Activated CD4-positive, alpha-beta T cell treated with anti-CD3 and anti-CD28 coated beads for 36 hours (primary cell): ENCODE measurements at regions of chr17 and their contacts with region 1.

Region 1: DNA sequence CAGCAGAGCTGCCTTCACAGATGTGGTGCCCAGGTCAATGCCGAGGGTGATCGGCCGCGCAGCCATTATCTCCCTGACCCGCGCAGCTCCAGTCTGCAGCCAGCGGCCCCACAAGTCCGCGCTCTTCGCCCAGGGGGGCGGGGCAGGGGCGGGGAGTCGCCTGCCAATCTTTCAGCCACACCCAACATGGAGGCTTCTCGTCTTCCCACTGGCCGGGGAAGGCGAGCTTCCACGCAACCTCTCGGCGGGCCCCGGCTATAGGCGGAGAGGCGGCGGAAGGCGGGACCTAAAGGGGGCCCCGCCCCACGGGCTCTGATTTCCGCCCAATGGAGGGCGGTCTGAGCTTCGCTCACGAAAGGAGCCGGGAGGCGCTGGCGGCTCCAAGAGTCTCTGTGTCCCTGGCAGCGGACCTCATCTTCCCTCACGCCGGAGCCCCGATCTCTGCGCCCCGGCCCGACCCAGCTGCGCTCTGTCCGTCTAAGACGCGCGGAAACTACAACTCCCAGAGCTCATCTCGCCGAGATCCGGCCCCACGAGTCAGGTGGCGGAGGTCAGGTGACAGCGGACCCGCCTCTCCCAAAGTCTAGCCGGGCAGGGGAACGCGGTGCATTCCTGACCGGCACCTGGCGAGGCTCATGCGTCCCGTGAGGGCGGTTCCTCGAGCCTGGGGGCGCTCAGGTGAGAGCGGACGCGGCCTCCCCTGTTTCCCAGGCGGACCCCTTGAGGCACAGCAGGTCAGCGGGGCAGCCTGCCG is at the starts of genes CTNS and SHPK:
- DNase-seq: peak; percentile 97
- ATAC-seq: peak; percentile 97
- H3K4me3 Mint-ChIP-seq: peak within 1 kb of the TSS; percentile 93
- H3K27ac Mint-ChIP-seq: peak within 1 kb of the TSS; percentile 99
- H3K4me1 Mint-ChIP-seq: peaks cover 42% of the 10 kb centered on the region
- H3K27me3 Mint-ChIP-seq: no peaks in the 10 kb centered on the region
- total RNA-seq, gene CTNS: 10.1 to 11.1 TPM
- total RNA-seq, gene SHPK: 12.5 to 15.0 TPM

Region 2: GRCh38 chr17:2336215-2336851 is 1300.0 kb before region 1 on chr17 and contains the start of gene TSR1:
- CTCF ChIA-PET with region 1: no interaction called
- POLR2A ChIA-PET with region 1: no interaction called
- intact Hi-C with region 1: loop called in 1 of 2 experiments (anchors 5 kb)
- DNase-seq: peak; percentile 94
- ATAC-seq: peak; percentile 93
- H3K4me3 Mint-ChIP-seq: no peak within 1 kb of the TSS
- H3K27ac Mint-ChIP-seq: peak within 1 kb of the TSS; percentile 99
- H3K4me1 Mint-ChIP-seq: peaks cover 14% of the 10 kb centered on the region
- H3K27me3 Mint-ChIP-seq: no peaks in the 10 kb centered on the region
- total RNA-seq, gene TSR1: 59.3 to 77.0 TPM

Region 3: GRCh38 chr17:2711601-2712299 is 924.6 kb before region 1 on chr17 and contains the start of gene CLUH:
- CTCF ChIA-PET with region 1: no interaction called
- POLR2A ChIA-PET with region 1: no interaction called
- intact Hi-C with region 1: loop called in 1 of 2 experiments (anchors 1 kb)
- DNase-seq: peak; percentile 98
- ATAC-seq: peak; percentile 95
- H3K4me3 Mint-ChIP-seq: peak within 1 kb of the TSS; percentile 86
- H3K27ac Mint-ChIP-seq: peak within 1 kb of the TSS; percentile 84
- H3K4me1 Mint-ChIP-seq: peaks cover 35% of the 10 kb centered on the region
- H3K27me3 Mint-ChIP-seq: no peaks in the 10 kb centered on the region
- total RNA-seq, gene CLUH: 107 to 123 TPM

Region 4: DNA sequence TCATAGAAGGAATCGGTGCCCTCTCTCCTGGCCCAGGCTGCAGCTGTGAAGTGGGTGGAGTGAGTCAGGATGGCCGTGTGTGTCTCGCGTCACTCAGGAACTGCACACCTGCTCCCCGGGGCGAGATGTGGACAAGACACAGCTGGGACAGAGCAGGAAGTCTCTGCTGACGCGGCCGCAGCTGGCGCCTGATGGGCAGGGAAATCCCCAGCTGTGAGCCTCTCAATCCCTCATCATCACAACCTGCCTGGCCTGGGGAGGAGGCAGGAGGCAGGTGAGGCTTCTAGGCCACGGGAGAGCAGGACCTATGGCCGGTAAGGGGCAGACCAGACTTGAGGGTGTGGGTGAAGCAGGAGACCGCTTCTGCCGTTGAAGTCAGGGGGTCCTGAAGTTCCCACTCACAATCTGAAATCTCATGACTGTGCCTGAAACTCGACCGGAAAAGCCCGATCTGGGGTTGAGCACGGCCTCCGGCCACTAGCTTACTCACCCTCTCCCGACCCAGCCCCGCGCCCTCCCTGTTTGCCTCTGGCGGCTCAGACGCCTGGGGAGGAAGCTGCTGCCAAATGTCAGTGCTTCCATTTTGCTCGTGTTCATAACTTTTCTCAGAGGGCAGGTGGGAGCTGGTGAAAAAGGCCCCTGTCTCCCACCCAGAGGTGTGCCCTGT is 77.6 kb before region 1 on chr17:
- CTCF ChIA-PET with region 1: no interaction called
- POLR2A ChIA-PET with region 1: no interaction called
- intact Hi-C with region 1: loop called in 1 of 2 experiments (anchors 2 kb)
- DNase-seq: peak; percentile 85
- ATAC-seq: peak; percentile 81
- H3K4me3 Mint-ChIP-seq: no peak overlapping the region
- H3K27ac Mint-ChIP-seq: peak overlapping the region; percentile 69
- H3K4me1 Mint-ChIP-seq: peaks cover 34% of the 10 kb centered on the region
- H3K27me3 Mint-ChIP-seq: no peaks in the 10 kb centered on the region

Region 5: GRCh38 chr17:3594051-3594800 is 42.1 kb before region 1 on chr17:
- CTCF ChIA-PET with region 1: no interaction called
- POLR2A ChIA-PET with region 1: no interaction called
- intact Hi-C with region 1: no loop called
- DNase-seq: no peak
- ATAC-seq: no peak
- H3K4me3 Mint-ChIP-seq: no peak overlapping the region
- H3K27ac Mint-ChIP-seq: no peak overlapping the region
- H3K4me1 Mint-ChIP-seq: no peaks in the 10 kb centered on the region
- H3K27me3 Mint-ChIP-seq: no peaks in the 10 kb centered on the region

Region 6: DNA sequence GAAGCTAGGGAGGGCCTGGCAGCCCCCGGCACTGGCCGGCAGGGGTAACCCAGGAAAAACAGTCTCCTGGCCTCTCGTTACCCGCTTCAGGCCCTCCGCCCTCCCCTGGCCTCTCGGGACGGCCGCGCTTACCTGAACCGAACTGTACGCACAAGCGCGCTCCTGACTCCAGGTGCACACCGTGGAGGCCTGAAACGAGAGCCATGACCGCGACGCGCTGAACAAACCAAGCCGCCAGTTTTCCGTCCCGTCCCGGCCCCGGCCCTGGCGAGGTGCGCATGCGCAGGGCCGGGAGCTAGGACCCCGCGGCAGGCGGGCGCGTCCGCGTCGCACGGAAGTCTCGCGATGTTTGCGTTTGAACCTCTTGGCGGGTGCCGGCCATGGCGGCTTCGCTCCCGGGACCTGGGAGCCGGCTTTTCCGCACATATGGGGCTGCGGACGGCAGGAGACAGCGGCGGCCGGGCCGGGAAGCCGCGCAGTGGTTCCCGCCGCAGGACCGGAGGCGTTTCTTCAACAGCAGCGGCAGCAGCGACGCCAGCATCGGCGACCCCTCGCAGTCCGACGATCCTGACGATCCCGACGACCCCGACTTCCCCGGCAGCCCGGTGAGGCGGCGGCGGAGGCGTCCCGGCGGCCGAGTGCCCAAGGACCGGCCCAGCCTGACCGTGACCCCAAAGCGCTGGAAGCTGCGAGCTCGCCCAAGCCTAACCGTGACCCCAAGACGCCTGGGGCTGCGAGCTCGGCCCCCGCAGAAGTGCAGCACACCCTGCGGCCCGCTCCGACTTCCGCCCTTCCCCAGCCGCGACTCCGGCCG is 87.4 kb after region 1 on chr17 and contains the start of gene HASPIN:
- CTCF ChIA-PET with region 1: no interaction called
- POLR2A ChIA-PET with region 1: no interaction called
- intact Hi-C with region 1: loop called in 1 of 2 experiments (anchors 1 kb)
- DNase-seq: peak; percentile 96
- ATAC-seq: peak; percentile 86
- H3K4me3 Mint-ChIP-seq: peak within 1 kb of the TSS; percentile 83
- H3K27ac Mint-ChIP-seq: peak within 1 kb of the TSS; percentile 93
- H3K4me1 Mint-ChIP-seq: peaks cover 58% of the 10 kb centered on the region
- H3K27me3 Mint-ChIP-seq: no peaks in the 10 kb centered on the region
- total RNA-seq, gene HASPIN: 21.0 to 25.2 TPM

Region 7: DNA sequence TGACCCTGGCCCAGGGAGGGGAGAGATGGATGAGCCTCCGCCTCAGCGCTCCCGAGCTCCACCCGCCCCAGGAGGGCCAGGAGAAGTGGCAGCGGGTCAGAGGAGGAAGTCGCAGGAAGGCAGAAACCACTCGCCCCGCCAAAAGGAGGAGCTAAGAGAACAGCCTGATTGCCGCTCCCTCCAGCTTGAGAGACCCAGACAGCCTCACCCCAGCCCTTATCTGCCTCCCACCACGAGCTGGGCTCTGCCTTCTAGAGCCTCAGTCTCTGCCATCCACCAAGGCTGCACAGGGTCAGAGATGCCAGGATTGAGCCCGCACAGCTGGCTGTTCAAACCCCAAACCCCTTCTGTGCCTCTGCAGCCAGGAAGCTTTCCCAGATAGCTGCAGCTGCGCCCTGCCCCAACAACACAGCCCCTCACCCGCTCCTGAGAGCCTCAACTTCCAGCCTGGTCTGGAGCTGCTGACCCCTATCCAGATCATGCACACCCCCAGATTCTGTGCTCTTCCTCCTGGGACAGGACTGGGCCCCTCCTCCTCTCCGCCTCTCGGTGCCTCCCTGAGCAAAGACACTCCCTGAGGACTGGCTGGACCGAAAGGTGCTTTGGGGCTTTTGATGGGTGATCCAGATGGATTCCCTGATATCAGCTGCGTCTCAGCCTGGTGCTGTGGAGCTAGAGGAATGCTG is 328.9 kb after region 1 on chr17:
- CTCF ChIA-PET with region 1: no interaction called
- POLR2A ChIA-PET with region 1: no interaction called
- intact Hi-C with region 1: loop called in 1 of 2 experiments (anchors 1 kb)
- DNase-seq: peak; percentile 86
- ATAC-seq: peak; percentile 75
- H3K4me3 Mint-ChIP-seq: peak overlapping the region; percentile 81
- H3K27ac Mint-ChIP-seq: peak overlapping the region; percentile 93
- H3K4me1 Mint-ChIP-seq: peaks cover 40% of the 10 kb centered on the region
- H3K27me3 Mint-ChIP-seq: no peaks in the 10 kb centered on the region